SK-N-SH (cell line): ENCODE measurements at regions of chr6 and their contacts with region 1.

Region 1: DNA sequence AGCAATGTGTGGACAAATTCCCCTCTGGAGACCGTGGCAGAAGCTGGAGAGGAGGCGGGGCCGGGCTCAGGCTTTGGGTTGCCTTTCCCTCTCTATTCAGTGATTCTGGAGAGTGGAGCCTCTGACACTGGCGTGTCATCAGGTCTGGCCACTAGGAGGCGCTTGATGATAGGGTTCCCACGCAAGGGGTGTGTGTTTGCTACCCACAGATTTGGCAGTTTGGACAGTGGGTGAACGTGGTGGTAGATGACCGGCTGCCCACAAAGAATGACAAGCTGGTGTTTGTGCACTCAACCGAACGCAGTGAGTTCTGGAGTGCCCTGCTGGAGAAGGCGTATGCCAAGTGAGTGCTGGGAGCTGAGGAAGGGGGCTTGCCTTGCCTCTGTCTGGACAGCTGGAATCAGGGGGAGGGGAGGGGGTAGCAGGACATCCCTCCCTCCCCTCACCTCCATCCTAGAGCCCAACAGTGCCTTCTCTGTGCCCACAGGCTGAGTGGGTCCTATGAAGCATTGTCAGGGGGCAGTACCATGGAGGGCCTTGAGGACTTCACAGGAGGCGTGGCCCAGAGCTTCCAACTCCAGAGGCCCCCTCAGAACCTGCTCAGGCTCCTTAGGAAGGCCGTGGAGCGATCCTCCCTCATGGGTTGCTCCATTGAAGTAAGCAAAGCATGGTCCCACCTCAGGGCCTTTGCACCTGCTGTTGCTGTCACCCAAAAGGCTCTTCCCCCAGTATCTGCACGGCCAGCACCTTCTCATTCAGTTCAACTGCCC is 14.3 kb downstream of the CAPN11 start:
- DNase-seq: peak; percentile 88
- H3K4me3 ChIP-seq: no peak overlapping the region
- H3K27ac ChIP-seq: no peak overlapping the region
- H3K4me1 ChIP-seq: peaks cover 0 to 4% of the 10 kb centered on the region in 2 experiments; a peak in 1 of 4 replicates
- H3K27me3 ChIP-seq: no peaks in the 10 kb centered on the region
- CTCF ChIP-seq: peak; percentile 90
- EP300 ChIP-seq: no peak
- RAD21 ChIP-seq: peak; percentile 95

Region 2: DNA sequence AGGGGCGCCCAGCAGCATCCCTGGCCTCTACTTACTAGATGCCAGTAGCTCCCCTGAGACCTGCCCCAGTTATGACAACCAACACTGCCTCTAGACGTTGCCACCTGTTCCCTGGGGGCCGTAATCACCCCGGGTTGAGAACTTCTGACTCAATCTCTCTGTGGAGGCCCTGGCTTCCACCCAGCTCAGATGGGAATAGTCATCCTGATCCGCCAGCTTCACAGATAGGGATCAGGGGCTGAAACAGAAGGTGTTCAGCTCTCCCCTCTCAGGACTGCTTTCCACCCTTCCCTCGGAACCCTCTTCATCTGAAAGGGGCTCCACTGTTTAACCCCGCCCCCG is 10.9 kb before region 1 on chr6:
- CTCF ChIA-PET with region 1: interaction called, 33 read pairs
- POLR2A ChIA-PET with region 1: no interaction called
- DNase-seq: no peak
- H3K4me3 ChIP-seq: no peak overlapping the region
- H3K27ac ChIP-seq: no peak overlapping the region
- H3K4me1 ChIP-seq: peaks cover 0 to 3% of the 10 kb centered on the region in 2 experiments; a peak in 1 of 4 replicates
- H3K27me3 ChIP-seq: no peaks in the 10 kb centered on the region
- CTCF ChIP-seq: no peak
- EP300 ChIP-seq: no peak
- RAD21 ChIP-seq: no peak

Region 3: GRCh38 chr6:44201638-44202303 is 28.9 kb after region 1 on chr6:
- CTCF ChIA-PET with region 1: interaction called, 14 read pairs
- POLR2A ChIA-PET with region 1: no interaction called
- DNase-seq: no peak
- H3K4me3 ChIP-seq: no peak overlapping the region
- H3K27ac ChIP-seq: no peak overlapping the region
- H3K4me1 ChIP-seq: peaks cover 0 to 2% of the 10 kb centered on the region in 2 experiments; a peak in 1 of 4 replicates
- H3K27me3 ChIP-seq: no peaks in the 10 kb centered on the region
- CTCF ChIP-seq: no peak
- EP300 ChIP-seq: no peak
- RAD21 ChIP-seq: no peak

Region 4: DNA sequence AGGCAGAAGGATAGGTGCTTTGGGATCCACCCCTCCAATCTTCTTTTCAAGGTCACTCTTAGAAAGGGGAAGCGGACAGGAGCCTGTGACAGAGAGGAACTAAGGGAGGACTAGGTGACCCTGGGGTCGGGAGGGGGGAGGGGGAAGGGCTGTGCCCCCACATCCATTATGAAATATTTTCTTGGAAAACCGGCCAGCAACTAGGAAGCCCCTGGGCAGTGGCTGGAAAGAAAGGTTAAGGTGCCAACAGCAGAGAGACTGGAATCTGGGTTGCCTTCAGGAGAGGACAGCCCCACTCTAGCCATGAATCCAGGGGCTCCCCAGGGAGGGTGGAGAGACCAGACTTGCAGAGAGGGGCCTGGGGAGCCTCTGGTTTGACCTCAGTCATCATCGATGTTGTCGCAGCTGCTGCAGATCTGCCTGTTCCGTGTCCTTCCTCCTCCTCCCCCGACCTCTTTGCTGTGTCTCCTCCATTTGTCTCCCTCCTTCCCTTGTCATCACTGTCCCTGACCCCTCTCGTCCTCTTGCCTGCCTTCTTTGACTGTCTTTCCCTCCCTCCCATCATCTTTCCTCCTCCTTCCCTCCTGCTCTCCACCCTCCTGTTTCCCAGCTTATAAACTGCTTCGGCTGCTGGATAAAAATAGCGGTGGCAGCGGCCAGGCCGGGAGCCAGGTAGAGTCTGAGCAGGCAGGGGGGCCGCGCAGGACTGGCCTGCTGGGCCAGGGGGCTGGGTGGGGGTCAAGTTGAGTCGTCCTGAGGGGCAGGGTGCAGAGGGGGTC is 53.6 kb after region 1 on chr6:
- CTCF ChIA-PET with region 1: interaction called, 25 read pairs
- POLR2A ChIA-PET with region 1: interaction called, 3 read pairs
- DNase-seq: no peak
- H3K4me3 ChIP-seq: no peak overlapping the region
- H3K27ac ChIP-seq: peak overlapping the region in 1 of 2 experiments; percentile 69; a peak in 1 of 4 replicates
- H3K4me1 ChIP-seq: peaks cover 13 to 80% of the 10 kb centered on the region in 2 experiments
- H3K27me3 ChIP-seq: no peaks in the 10 kb centered on the region
- CTCF ChIP-seq: no peak
- EP300 ChIP-seq: no peak
- RAD21 ChIP-seq: no peak

Region 5: DNA sequence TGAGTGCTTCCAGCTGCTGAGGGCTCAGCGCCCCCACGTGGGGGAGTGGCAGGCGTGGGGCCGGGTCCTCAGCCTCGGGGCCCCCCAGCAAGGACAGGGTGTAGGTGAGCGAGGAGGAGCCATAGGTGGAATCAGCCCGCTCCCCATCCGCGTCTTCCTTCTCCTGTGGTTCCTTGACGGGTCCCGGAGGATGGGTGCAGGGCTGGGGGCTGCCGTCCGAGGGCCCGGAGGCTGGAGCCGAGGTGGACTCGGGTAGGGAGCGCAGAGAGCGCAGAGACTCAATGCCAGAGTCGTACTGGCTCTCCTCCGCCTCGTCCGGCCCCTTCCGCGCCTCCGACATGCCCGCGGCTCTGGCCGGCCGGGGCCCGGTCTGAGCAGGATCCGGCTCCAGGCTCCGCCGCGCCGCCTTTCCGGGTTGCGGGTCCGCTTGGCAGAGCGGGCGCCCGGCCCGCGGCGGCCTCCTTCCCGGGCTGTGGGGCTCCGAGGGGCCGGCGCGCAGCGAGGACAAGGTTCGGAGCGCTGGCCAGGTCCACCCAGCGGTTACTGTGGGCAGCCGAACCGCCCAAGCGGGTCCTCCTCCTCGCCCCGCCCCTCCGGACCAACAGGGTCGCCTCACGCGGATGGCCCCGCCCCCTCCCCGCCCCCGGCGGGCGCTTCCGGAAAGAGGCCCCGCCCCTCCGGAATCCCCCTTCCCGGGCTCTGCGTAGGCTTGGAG is 92.2 kb after region 1 on chr6 and contains the start of gene NFKBIE:
- CTCF ChIA-PET with region 1: interaction called, 13 read pairs
- POLR2A ChIA-PET with region 1: no interaction called
- DNase-seq: peak; percentile 98
- H3K4me3 ChIP-seq: peak within 1 kb of the TSS; percentile 74 to 89
- H3K27ac ChIP-seq: peak within 1 kb of the TSS; percentile 56 to 62
- H3K4me1 ChIP-seq: peaks cover 16 to 35% of the 10 kb centered on the region in 2 experiments; a peak in 2 of 4 replicates
- H3K27me3 ChIP-seq: peaks cover 20% of the 10 kb centered on the region
- CTCF ChIP-seq: peak; percentile 53
- EP300 ChIP-seq: no peak
- RAD21 ChIP-seq: peak; percentile 52
- polyA plus RNA-seq, gene NFKBIE: 5.8 and 6.4 TPM in 2 replicates